Calu3 (cell line): ENCODE measurements at regions of chr10 and their contacts with region 1.

Region 1: DNA sequence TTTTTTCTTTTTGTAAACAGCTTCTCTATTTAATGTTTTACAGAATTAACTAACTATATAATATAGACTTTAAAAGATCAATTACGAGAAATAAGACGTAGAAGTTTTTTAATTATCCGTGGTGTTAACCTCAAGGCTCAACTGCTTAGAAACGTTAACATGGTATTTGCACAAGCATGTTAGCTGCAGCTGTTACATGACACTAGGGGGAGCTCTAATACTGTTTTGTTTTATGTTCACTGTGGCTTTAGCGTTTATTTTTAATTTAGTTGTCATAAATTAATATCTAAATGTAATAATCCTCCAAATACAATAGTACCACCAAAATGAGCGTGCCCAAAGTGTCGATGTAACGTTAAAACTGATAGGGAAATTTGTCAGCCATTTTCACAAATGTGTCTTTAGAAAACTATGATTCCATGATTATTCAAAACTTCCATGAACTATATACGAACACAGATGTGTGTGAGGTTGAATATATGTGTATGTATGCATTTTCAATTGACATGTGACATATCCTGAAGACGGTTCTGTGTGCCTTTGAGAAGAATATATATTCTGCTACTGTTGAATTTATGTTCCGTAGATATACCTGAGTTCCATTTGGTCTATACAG is 828.8 kb upstream of the MBL2 start:
- DNase-seq: no peak
- H3K4me3 Mint-ChIP-seq: no peak overlapping the region
- H3K27ac Mint-ChIP-seq: no peak overlapping the region
- H3K4me1 Mint-ChIP-seq: peaks cover 10% of the 10 kb centered on the region
- H3K27me3 Mint-ChIP-seq: no peaks in the 10 kb centered on the region
- CTCF ChIP-seq: peak; percentile 55

Region 2: GRCh38 chr10:52883996-52884871 is 717.1 kb before region 1 on chr10:
- CTCF ChIA-PET with region 1: no interaction called
- intact Hi-C with region 1: loop called (anchors 5 kb)
- DNase-seq: peak; percentile 82
- H3K4me3 Mint-ChIP-seq: peak overlapping the region; percentile 63
- H3K27ac Mint-ChIP-seq: peak overlapping the region; percentile 70
- H3K4me1 Mint-ChIP-seq: no peaks in the 10 kb centered on the region
- H3K27me3 Mint-ChIP-seq: peaks cover 7% of the 10 kb centered on the region
- CTCF ChIP-seq: peak; percentile 75

Region 3: DNA sequence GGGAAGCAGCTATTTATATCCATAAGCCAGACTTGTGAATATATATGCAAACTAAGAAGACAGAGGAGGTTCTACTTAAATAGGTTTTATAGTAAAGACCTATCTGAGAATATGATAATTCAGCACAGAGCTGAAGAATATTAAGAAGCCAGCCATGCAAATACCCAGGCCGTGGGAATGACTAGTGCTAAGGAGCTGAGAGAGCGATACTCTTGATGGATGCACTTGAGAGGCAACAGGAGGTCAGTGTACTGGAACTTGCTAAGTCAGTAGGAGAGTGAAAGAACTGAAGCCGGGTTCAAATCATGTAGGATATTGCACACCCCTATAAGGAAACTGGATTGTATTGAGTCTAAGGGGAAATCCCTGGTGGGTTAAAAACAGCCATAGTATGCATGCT is 114.8 kb after region 1 on chr10:
- CTCF ChIA-PET with region 1: no interaction called
- intact Hi-C with region 1: no loop called
- DNase-seq: no peak
- H3K4me3 Mint-ChIP-seq: no peak overlapping the region
- H3K27ac Mint-ChIP-seq: no peak overlapping the region
- H3K4me1 Mint-ChIP-seq: no peaks in the 10 kb centered on the region
- H3K27me3 Mint-ChIP-seq: no peaks in the 10 kb centered on the region
- CTCF ChIP-seq: no peak

Region 4: DNA sequence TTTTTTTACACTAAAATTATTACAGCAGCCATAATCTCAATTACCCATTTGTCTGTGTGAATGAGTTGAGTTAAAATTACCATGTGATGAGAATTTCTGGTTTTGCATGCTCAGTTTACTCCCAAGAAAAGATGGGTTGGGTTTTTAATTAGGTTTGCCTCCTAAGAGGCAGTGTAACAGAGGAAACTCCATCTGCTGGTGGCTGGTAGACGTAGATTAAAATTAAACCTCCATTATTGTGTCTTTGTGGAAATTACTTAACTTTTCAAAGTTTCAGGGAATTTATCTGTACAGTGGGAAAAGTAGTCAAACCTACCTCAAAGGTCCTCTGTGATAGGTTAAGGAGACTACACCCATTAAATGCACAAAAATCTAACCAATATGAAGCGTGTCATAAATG is 245.4 kb after region 1 on chr10:
- CTCF ChIA-PET with region 1: interaction called, 3 read pairs
- intact Hi-C with region 1: loop called (anchors 2 kb)
- DNase-seq: no peak
- H3K4me3 Mint-ChIP-seq: no peak overlapping the region
- H3K27ac Mint-ChIP-seq: no peak overlapping the region
- H3K4me1 Mint-ChIP-seq: peaks cover 11% of the 10 kb centered on the region
- H3K27me3 Mint-ChIP-seq: no peaks in the 10 kb centered on the region
- CTCF ChIP-seq: no peak

Region 5: DNA sequence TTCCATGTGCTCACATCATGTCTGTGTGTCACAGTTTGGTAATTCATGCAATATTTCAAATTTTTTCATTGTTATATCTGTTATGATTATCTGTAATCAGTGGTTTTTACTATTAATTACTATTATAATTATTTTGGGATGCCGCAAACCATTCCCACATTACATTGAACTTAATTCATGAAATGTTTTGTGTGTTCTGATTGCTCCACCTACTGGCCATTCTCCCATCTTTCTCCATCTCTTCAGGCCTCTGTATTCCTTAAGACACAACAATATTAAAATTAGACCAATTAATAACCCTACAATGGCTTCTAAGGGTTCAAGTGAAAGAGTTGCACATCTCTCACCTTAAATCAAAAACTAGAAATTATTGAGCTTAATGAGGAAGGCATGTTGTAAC is 801.2 kb after region 1 on chr10:
- CTCF ChIA-PET with region 1: no interaction called
- intact Hi-C with region 1: loop called (anchors 1 kb)
- DNase-seq: peak; percentile 37
- H3K4me3 Mint-ChIP-seq: no peak overlapping the region
- H3K27ac Mint-ChIP-seq: no peak overlapping the region
- H3K4me1 Mint-ChIP-seq: no peaks in the 10 kb centered on the region
- H3K27me3 Mint-ChIP-seq: no peaks in the 10 kb centered on the region
- CTCF ChIP-seq: peak; percentile 67